ENCODE measurements at regions of chr15 and their contacts with region 1.

Region 1: DNA sequence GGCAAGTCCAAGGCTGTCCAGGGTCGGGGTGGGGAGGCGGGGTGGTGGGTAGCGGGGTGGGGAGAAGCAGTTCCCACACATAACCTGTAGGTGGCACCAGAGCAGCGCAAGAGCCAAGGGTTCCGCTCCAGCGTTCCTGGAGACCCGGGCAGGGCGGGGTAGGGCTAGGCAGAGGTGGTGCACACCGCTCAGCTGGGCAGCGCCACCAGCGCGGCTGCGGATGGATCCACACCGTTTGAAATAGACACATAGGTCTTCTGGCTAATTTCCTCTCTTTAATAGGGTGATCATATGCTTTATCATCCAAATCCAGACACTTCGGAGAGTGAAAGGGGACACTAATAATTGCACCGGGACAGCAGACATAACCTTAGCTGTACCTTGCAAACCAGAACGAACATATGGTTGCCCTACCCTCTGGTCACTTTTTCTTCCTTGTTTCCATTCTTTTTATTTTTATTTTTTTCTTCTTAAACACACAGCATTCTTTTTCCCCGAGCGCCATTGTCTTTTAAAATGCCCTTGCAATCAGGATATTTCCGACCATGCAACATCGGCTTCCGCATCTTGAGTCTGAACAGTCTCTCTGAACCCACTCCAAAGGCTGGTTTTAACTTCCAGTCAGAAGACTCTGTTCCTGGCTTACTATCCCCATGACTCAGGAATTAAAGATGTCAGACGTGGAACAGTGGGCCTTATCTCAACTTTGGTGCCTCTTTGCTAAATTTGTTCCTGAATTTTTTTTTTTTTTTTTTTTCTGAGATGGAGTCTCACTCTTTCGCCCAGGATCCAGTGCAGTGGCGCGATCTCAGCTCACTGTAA is 12.5 kb upstream of the ZSCAN2 start:
- DNase-seq: peak; percentile 92
- ATAC-seq: peak; percentile 100
- H3K4me3 Mint-ChIP-seq: peak overlapping the region; percentile 46
- H3K27ac Mint-ChIP-seq: no peak overlapping the region
- H3K4me1 Mint-ChIP-seq: peaks cover 3% of the 10 kb centered on the region
- H3K27me3 Mint-ChIP-seq: peaks cover 4% of the 10 kb centered on the region
- CTCF ChIP-seq: peak; percentile 83

Region 2: GRCh38 chr15:84398763-84399701 is 189.2 kb before region 1 on chr15:
- CTCF ChIA-PET with region 1: no interaction called
- POLR2A ChIA-PET with region 1: no interaction called
- intact Hi-C with region 1: no loop called
- DNase-seq: no peak
- ATAC-seq: no peak
- H3K4me3 Mint-ChIP-seq: no peak overlapping the region
- H3K27ac Mint-ChIP-seq: no peak overlapping the region
- H3K4me1 Mint-ChIP-seq: no peaks in the 10 kb centered on the region
- H3K27me3 Mint-ChIP-seq: peaks cover under 1% of the 10 kb centered on the region
- CTCF ChIP-seq: no peak

Region 3: GRCh38 chr15:84570164-84570735 is 18.0 kb before region 1 on chr15:
- CTCF ChIA-PET with region 1: interaction called, 44 read pairs
- POLR2A ChIA-PET with region 1: interaction called, 4 read pairs
- intact Hi-C with region 1: no loop called
- DNase-seq: peak; percentile 66
- ATAC-seq: peak; percentile 41
- H3K4me3 Mint-ChIP-seq: peak overlapping the region; percentile 85
- H3K27ac Mint-ChIP-seq: peak overlapping the region; percentile 82
- H3K4me1 Mint-ChIP-seq: peaks cover 18% of the 10 kb centered on the region
- H3K27me3 Mint-ChIP-seq: no peaks in the 10 kb centered on the region
- CTCF ChIP-seq: no peak

Region 4: GRCh38 chr15:84600851-84601838 is 12.9 kb after region 1 on chr15 and contains the start of gene ZSCAN2:
- CTCF ChIA-PET with region 1: interaction called, 20 read pairs
- POLR2A ChIA-PET with region 1: interaction called, 3 read pairs
- intact Hi-C with region 1: no loop called
- DNase-seq: peak; percentile 98
- ATAC-seq: peak; percentile 96
- H3K4me3 Mint-ChIP-seq: peak within 1 kb of the TSS; percentile 91
- H3K27ac Mint-ChIP-seq: peak within 1 kb of the TSS; percentile 80
- H3K4me1 Mint-ChIP-seq: peaks cover 73% of the 10 kb centered on the region
- H3K27me3 Mint-ChIP-seq: no peaks in the 10 kb centered on the region
- CTCF ChIP-seq: no peak
- total RNA-seq, gene ZSCAN2: 6.6 to 7.6 TPM

Region 5: GRCh38 chr15:84633311-84634227 is 45.3 kb after region 1 on chr15:
- CTCF ChIA-PET with region 1: interaction called, 8 read pairs
- POLR2A ChIA-PET with region 1: no interaction called
- intact Hi-C with region 1: loop called (anchors 10 kb)
- DNase-seq: peak; percentile 81
- ATAC-seq: peak; percentile 48
- H3K4me3 Mint-ChIP-seq: peak overlapping the region; percentile 94
- H3K27ac Mint-ChIP-seq: peak overlapping the region; percentile 96
- H3K4me1 Mint-ChIP-seq: peaks cover 33% of the 10 kb centered on the region
- H3K27me3 Mint-ChIP-seq: no peaks in the 10 kb centered on the region
- CTCF ChIP-seq: no peak

Region 6: DNA sequence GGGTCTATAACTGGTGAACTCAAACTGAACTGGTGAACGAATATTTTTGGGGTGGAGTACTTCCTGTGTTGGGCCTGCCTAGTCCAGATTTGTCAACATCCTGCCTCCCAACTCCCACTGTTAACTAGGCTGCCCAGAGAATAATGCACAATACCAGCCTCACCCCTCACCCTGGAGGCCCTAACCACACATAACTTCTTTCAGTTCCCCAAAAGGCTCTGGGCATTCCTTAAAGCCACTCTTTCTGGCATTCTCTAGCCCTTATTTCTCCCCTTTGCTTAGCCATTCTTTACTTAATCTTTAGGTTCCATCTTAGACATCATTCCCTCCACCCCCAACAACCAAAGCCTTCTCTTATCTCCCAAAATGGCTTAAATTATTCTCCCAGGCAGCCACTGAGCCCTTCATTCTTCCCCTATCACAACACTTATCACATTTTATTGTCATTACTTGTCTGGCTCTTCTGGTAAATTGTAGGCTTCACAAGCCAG is 136.8 kb after region 1 on chr15:
- CTCF ChIA-PET with region 1: no interaction called
- POLR2A ChIA-PET with region 1: no interaction called
- intact Hi-C with region 1: no loop called
- DNase-seq: no peak
- ATAC-seq: peak; percentile 49
- H3K4me3 Mint-ChIP-seq: no peak overlapping the region
- H3K27ac Mint-ChIP-seq: peak overlapping the region; percentile 82
- H3K4me1 Mint-ChIP-seq: peaks cover 32% of the 10 kb centered on the region
- H3K27me3 Mint-ChIP-seq: no peaks in the 10 kb centered on the region
- CTCF ChIP-seq: no peak

Region 7: GRCh38 chr15:84797212-84797611 is 208.9 kb after region 1 on chr15:
- CTCF ChIA-PET with region 1: no interaction called
- POLR2A ChIA-PET with region 1: no interaction called
- intact Hi-C with region 1: no loop called
- DNase-seq: no peak
- ATAC-seq: no peak
- H3K4me3 Mint-ChIP-seq: no peak overlapping the region
- H3K27ac Mint-ChIP-seq: no peak overlapping the region
- H3K4me1 Mint-ChIP-seq: peaks cover 2% of the 10 kb centered on the region
- H3K27me3 Mint-ChIP-seq: no peaks in the 10 kb centered on the region
- CTCF ChIP-seq: no peak

Region 8: GRCh38 chr15:84840741-84841429 is 252.6 kb after region 1 on chr15:
- CTCF ChIA-PET with region 1: no interaction called
- POLR2A ChIA-PET with region 1: no interaction called
- intact Hi-C with region 1: no loop called
- DNase-seq: no peak
- ATAC-seq: no peak
- H3K4me3 Mint-ChIP-seq: no peak overlapping the region
- H3K27ac Mint-ChIP-seq: no peak overlapping the region
- H3K4me1 Mint-ChIP-seq: no peaks in the 10 kb centered on the region
- H3K27me3 Mint-ChIP-seq: no peaks in the 10 kb centered on the region
- CTCF ChIP-seq: no peak

Region 9: GRCh38 chr15:84883916-84884768 is 295.9 kb after region 1 on chr15 and contains the start of gene SLC28A1:
- CTCF ChIA-PET with region 1: interaction called, 8 read pairs
- POLR2A ChIA-PET with region 1: no interaction called
- intact Hi-C with region 1: loop called (anchors 5 kb)
- DNase-seq: no peak
- ATAC-seq: no peak
- H3K4me3 Mint-ChIP-seq: no peak within 1 kb of the TSS
- H3K27ac Mint-ChIP-seq: no peak within 1 kb of the TSS
- H3K4me1 Mint-ChIP-seq: peaks cover 2% of the 10 kb centered on the region
- H3K27me3 Mint-ChIP-seq: no peaks in the 10 kb centered on the region
- CTCF ChIP-seq: no peak
- total RNA-seq, gene SLC28A1: not detected

Measured in activated CD8-positive, alpha-beta T cell treated with anti-CD3 and anti-CD28 coated beads for 36 hours (primary cell).